ENCODE measurements at regions of chr6 and their contacts with region 1.

Region 1: DNA sequence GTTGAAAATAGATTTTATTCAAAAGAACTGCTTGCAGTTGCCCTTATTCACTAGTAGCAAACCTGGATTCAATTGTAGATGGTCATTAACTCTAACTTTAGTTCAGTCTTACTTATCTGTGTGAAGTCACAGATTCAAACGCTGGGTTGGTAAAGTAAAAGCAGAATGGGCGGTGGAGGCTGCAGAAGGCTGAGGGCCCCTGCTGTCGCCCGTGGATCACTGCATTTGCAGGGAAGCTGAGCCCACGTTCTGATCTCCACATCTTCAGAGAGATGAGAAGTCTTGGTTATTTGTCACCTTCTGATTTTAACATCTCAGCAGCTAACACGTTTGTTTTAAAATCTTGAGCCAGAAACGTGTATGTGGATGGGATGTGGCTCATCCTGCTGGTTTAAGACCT is 75.1 kb downstream of the SNX9 start:
- DNase-seq: peak in 9 of 10 donors; percentile 47 to 76 (median 69)
- H3K4me3 ChIP-seq: peak overlapping the region in 1 of 59 donors; percentile 5
- H3K27ac ChIP-seq: peak overlapping the region in 57 of 59 donors; percentile 10 to 85 (median 71)
- H3K27me3 ChIP-seq: no peaks in the 10 kb centered on the region
- CTCF ChIP-seq: peak in 52 of 56 donors; percentile 40 to 81 (median 62)

Region 2: DNA sequence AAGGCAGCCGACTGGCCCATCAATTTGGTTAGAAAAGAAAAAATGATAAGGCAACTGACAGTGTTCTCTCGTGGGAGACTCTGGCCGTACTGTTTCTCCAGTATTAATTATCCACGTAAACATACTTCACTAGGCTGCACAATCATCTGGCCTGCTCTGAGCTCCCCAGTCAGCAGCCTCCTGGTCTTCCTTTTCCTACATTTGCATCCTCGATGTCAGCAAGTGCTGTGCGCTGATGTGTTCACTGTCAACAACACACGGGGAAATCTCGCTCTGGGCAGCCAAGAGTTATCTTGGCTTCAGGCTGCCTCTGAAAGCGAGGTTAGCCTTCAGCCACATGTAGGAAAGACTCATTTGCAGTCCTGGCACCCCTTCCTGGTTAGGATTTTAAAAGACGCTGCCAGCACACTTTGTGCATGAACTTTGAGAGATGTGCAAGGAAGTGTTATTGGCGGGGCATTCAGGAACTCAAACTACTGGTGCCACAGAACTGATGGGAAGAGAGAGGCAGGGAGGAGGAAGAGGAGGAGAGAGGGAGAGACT is 1581.5 kb before region 1 on chr6:
- intact Hi-C with region 1: no loop called
- DNase-seq: peak in 1 of 10 donors; percentile 11
- H3K4me3 ChIP-seq: peak overlapping the region in 4 of 59 donors; percentile 5 to 24 (median 14)
- H3K27ac ChIP-seq: no peak overlapping the region
- H3K27me3 ChIP-seq: peaks cover 0 to 3% (median 0%) of the 10 kb centered on the region in 45 donors
- CTCF ChIP-seq: no peak

Region 3: GRCh38 chr6:157376706-157377230 is 521.4 kb before region 1 on chr6:
- intact Hi-C with region 1: no loop called
- DNase-seq: no peak
- H3K4me3 ChIP-seq: no peak overlapping the region
- H3K27ac ChIP-seq: peak overlapping the region in 5 of 59 donors; percentile 20 to 42 (median 37)
- H3K27me3 ChIP-seq: no peaks in the 10 kb centered on the region
- CTCF ChIP-seq: no peak

Region 4: DNA sequence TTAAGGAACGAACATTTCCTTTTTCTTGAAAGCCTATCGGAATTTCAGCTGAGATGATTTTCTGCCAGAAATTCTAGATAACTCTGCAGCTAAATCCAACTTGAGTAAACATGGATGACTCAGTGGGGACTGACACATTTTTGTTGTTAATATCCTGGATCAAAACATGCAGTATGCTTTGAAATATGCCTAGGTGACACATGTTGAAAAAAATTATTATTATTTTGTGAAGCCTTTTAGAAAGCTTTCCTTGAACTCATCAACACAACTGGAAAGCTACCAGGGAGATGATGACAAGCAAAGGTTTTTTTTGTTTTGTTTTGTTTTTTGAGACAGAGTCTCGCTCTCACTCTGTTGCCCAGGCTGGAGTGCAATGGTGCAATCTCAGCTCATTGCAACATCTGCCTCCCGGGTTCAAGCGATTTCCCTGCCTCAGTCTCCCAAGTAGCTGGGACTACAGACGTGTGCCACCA is 215.2 kb before region 1 on chr6:
- intact Hi-C with region 1: no loop called
- DNase-seq: no peak
- H3K4me3 ChIP-seq: no peak overlapping the region
- H3K27ac ChIP-seq: peak overlapping the region in 1 of 59 donors; percentile 12
- H3K27me3 ChIP-seq: no peaks in the 10 kb centered on the region
- CTCF ChIP-seq: no peak

Region 5: DNA sequence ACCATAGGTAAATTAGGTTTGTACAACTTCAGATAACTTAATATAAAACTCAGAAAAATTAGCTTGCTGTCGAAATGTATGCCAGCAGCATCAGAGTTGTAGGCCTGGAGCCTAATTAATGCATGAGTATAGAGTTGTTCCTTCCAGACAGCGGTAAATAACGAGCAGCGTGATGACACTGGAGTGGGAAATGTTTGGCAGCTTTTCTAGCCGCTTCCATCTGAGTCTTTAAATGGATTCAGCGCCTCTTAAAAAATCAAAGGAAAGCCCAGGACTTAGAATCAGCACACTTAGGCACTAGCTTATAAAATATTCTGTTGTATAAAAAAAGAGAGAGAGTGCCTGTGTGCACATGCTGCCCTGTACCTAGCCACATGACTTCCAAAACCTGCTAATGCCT is 39.7 kb after region 1 on chr6:
- intact Hi-C with region 1: loop called (anchors 5 kb)
- DNase-seq: no peak
- H3K4me3 ChIP-seq: no peak overlapping the region
- H3K27ac ChIP-seq: peak overlapping the region in 50 of 59 donors; percentile 15 to 100 (median 98)
- H3K27me3 ChIP-seq: no peaks in the 10 kb centered on the region
- CTCF ChIP-seq: no peak

Measured in dorsolateral prefrontal cortex (tissue), 120 donors.